GM10248 (cell line): ENCODE measurements at regions of chr4 and their contacts with region 1.

Region 1: DNA sequence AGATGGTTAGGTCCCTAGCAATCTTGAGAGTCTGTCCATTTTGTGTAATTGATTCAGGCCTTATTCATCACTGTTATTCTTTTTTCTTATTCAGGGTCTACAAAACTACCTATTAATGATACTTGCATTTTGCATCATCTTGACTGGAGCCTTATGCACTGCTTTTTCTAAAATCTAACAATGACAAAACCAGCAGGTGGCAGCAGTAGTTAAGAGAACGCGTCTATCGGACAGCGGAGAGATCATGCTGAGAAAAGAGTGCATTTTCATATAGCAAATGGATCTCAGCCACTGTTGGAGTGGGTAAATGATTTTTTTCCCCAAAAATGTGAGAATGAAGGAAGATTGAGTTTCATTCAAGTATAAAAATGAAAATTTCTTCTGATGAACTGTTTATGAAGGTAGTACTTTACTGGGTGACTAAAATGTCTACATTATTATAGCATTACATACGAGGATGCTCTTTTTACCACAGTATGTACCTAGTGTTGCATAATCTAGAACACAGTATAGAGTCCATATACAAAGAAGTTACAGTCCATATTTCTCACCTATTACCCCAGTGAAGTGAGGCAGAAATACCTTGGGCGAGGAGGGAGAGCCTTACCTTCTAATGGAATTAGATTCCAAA is 43.2 kb downstream of the TMEM144 start:
- DNase-seq: peak; percentile 38
- CTCF ChIP-seq: peak; percentile 72

Region 2: GRCh38 chr4:158243071-158243470 is 10.4 kb before region 1 on chr4:
- CTCF ChIA-PET with region 1: interaction called, 12 read pairs
- POLR2A ChIA-PET with region 1: no interaction called
- DNase-seq: no peak
- CTCF ChIP-seq: no peak

Region 3: DNA sequence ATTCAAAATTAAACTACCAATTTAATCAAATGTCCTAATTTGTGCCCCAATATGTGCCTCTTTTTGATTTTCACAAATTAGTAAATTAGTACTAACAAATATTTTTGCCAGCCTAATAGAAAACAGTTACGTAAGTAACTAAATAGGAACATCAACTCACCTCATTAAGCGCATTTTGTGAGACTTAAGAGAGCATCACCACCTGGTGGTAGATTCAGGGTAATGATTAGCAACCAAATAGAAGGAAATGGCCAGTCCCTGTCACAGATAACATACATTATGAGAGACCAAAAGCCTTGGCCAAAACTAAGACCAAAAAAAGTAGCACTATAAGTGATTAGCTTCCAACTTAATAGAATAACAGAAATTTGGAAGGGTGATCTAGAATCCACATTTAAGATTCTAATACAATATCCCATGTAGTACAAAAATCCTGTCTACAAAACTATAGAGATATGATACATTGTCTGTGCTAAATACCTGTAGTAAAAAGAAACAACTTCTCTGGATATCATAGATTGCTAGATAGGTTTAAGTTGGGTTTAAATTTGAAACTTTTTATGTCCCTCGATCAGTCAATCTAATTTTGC is 371.5 kb after region 1 on chr4:
- CTCF ChIA-PET with region 1: interaction called, 12 read pairs
- POLR2A ChIA-PET with region 1: no interaction called
- DNase-seq: peak; percentile 24
- CTCF ChIP-seq: peak; percentile 70

Region 4: DNA sequence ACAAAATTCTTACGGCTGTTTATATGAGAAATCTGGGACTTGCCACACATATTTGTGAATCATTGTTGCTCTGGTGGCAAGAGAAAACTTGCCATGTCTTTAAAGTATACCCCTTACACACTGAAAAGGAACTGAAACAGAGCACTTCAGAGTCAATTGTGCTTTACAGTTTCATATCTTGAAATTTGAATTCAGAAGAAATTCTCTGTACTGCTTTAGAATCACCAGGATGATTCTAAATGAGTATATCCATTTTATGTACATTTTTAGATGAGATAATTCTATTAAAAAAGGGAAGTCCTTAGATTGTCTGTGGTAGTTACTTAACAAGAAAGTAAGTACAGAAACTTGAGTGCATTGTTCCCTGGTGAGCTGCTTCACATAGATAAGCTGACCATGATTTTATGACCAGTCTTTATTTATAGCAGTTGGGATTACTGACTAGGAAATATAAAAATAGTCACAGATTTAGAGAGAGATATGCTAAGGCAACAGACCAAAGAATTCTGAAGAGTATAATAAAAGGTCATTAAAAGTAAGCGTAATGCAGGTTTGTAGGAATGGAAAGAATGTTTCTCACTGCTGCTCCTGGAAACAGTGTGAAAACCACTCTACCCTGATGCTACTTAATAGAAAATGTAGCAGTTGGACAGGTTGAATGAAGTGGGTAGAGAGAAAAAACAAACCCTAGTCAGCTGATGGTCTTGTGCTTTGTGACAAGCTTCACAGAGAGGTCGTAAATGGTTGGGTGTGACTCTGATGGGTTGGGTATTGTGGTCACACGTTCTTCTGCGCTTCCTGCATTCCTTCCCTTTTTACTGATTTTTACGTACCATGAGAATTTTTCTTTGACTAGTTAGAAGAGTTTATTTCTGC is 556.4 kb after region 1 on chr4:
- CTCF ChIA-PET with region 1: no interaction called
- POLR2A ChIA-PET with region 1: no interaction called
- DNase-seq: peak; percentile 35
- CTCF ChIP-seq: no peak